PC-9 (cell line): ENCODE measurements at regions of chr13 and their contacts with region 1.

Region 1: DNA sequence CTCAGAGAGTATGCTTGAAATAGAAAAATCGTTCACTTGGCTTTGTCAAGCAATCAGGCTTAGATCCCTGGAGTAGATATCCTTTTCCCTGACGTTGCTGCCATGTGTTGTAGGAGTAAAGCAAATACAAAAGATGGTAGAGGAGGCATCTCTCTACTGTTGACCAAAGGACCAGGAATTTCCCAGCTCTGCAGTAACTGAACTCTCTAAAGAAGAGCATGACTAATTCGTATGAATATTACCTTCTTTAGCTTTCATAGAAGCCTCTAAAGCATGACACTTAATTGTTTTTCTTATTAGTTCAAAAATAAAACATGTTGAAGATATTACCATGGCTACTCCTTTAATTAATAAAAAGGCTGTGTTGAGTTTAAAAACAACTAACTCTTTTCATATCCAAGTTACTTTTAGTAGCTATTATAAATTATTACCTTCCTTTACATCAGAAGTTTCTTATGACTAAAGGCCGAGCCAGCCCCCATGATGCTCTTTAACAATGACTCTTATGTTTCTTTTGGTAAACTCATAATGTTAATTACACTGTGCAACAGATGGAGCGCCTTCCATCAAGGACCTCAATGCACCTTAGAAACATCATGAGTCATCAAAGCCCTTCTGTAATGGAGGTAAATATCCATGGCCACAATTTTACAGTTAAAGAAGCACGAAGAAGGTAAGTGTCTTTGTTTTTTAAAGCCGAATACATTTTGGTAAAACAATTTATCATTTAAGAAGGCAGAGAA is 352.4 kb downstream of the KLF5 start:
- DNase-seq: no peak
- H3K4me3 ChIP-seq: no peak overlapping the region
- H3K27ac ChIP-seq: no peak overlapping the region
- H3K4me1 ChIP-seq: no peaks in the 10 kb centered on the region
- H3K27me3 ChIP-seq: no peaks in the 10 kb centered on the region
- CTCF ChIP-seq: no peak

Region 2: DNA sequence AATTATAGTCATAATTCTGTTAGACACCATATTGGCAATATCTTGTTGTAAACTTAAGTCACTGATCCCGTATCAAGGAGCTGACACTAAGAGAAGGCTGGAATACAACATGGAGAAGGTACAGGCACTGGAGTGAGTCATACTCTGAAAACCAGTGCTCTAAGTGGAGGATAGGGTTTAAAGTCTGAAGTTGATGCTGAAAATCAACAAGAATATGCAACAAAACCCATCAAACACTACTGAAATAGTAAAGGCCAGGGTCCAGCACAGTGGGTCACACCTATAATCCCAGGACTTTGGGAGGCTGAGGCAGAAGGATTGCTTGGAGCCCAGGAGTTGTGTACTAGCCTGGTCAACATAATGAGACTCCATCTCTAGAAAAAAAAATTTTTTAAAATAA is 425.6 kb before region 1 on chr13:
- CTCF ChIA-PET with region 1: no interaction called
- POLR2A ChIA-PET with region 1: interaction called, 13 read pairs
- intact Hi-C with region 1: no loop called
- DNase-seq: no peak
- H3K4me3 ChIP-seq: no peak overlapping the region
- H3K27ac ChIP-seq: no peak overlapping the region
- H3K4me1 ChIP-seq: peaks cover 12% of the 10 kb centered on the region; the same call in 1 of the 2 replicates
- H3K27me3 ChIP-seq: no peaks in the 10 kb centered on the region
- CTCF ChIP-seq: no peak

Region 3: DNA sequence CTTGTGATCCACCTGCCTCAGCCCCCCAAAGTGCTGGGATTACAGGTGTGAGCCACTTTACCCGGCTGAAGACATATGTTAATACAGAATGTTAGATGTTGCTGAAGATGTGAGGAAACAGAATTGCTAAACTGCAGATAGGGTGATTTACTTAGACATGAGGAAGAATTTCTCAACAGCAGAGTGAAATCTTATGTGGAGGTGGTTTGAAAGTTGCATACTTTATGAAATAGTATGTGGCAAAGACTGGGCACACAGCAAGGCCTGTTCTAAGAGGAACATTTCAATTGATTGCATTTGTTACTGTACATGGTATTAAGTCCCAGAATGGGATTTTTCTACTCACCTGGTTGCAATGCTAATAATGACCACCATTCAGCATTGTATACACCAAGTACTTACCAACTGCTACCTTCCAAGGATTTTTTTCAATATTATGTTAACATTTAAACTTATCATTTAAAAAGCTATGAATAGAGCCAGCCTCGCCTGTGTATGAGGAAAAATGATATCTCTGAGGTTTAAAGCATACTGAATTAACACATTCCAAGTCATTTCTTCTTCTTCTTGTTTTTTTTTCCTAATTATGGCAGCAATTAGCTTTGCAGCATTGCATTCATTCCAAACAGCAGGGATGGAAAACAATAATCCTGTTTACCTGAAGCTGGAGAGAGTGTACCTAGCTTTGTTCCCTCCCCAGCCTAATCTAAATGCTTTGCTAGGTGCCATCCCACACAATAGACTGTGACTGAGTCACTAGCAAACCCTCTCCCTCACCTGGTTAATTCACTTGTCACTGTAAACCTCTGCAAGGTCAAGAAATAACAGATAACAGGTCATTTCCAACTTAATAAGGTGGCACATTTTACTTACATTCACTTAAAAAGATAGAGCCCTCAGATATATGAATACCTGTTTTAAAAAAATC is 371.8 kb before region 1 on chr13:
- CTCF ChIA-PET with region 1: no interaction called
- POLR2A ChIA-PET with region 1: no interaction called
- intact Hi-C with region 1: no loop called
- DNase-seq: no peak
- H3K4me3 ChIP-seq: no peak overlapping the region
- H3K27ac ChIP-seq: no peak overlapping the region
- H3K4me1 ChIP-seq: peaks cover 19% of the 10 kb centered on the region; the same call in 1 of the 2 replicates
- H3K27me3 ChIP-seq: no peaks in the 10 kb centered on the region
- CTCF ChIP-seq: no peak

Region 4: DNA sequence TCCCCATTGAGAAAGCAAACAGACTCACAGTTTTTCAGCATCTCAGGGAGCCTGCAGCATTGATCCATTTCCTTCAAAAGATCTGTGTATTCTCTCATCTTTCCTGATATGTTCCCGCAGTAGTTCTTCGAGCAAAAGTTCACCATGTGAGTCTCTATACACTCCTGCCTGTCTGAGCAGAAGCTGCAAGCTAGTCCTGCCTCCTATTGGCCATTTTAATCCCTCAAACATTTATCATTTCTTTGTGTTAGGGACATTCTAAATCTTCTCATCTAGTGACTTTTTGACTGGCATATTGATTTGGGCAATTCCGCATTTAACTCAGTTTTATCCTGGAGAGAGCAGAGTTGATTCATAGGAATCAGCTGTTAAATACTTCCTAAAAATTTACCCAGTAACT is 1383.3 kb after region 1 on chr13:
- CTCF ChIA-PET with region 1: no interaction called
- POLR2A ChIA-PET with region 1: no interaction called
- intact Hi-C with region 1: no loop called
- DNase-seq: no peak
- H3K4me3 ChIP-seq: no peak overlapping the region
- H3K27ac ChIP-seq: no peak overlapping the region
- H3K4me1 ChIP-seq: no peaks in the 10 kb centered on the region
- H3K27me3 ChIP-seq: no peaks in the 10 kb centered on the region
- CTCF ChIP-seq: no peak